GM10248 (cell line): ENCODE measurements at regions of chr11 and their contacts with region 1.

Region 1: DNA sequence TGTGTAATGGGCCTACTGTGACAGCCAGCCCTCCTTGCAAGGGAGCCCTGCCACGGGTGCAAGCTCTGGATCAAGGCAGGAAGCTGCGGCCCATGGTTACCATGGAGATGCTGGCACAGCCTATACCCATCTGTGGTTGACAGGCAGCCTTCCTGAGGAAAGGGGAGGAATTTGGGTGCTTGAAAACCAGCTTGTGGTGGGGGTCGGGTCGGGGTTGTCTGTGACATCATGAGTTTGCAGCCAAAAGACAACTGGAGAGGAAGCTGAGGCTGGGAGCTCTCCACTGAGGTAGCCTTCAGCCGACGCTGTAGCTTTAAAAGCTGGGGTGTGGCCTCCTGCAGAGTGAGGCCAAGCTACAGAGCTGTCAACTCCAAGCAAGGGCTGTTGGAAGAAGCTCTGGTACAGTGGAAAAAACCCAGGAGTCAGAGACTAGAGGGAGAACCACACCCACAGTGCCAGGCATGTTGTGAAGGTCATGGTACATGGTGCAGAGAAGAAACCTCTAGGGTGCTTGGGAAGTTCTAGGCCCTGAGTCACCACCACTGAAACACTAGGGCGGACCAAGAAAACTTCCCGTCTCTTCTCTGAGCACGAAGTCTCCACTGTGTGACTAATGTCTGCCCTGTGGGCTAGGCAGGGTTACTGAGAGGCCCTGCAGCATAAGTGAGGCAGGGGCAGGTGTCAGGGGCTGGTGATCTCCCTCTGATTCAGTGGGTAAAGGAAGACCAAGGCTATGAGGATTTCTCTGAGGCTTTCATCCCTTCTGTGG is 10.8 kb upstream of the LDHA start:
- DNase-seq: peak; percentile 76
- CTCF ChIP-seq: no peak

Region 2: GRCh38 chr11:18364495-18365073 is 19.0 kb before region 1 on chr11:
- CTCF ChIA-PET with region 1: interaction called, 10 read pairs
- POLR2A ChIA-PET with region 1: no interaction called
- DNase-seq: no peak
- CTCF ChIP-seq: no peak

Region 3: GRCh38 chr11:18395735-18396504 is 12.3 kb after region 1 on chr11:
- CTCF ChIA-PET with region 1: interaction called, 35 read pairs
- POLR2A ChIA-PET with region 1: interaction called, 41 read pairs
- DNase-seq: peak; percentile 96
- CTCF ChIP-seq: no peak